ENCODE measurements at regions of chr11 and their contacts with region 1.

Region 1: GRCh38 chr11:33161120-33162005 is at the start of gene CSTF3:
- DNase-seq: peak; percentile 92
- ATAC-seq: peak; percentile 98
- H3K4me3 ChIP-seq: peak within 1 kb of the TSS; percentile 77 to 99 (median 78)
- H3K4me3 Mint-ChIP-seq: peak within 1 kb of the TSS; percentile 99
- H3K27ac ChIP-seq: peak within 1 kb of the TSS; percentile 84 to 88
- H3K27ac Mint-ChIP-seq: peak within 1 kb of the TSS; percentile 95
- H3K4me1 ChIP-seq: peaks cover 25 to 32% of the 10 kb centered on the region in 2 donors
- H3K4me1 Mint-ChIP-seq: peaks cover 49% of the 10 kb centered on the region
- H3K27me3 ChIP-seq: no peaks in the 10 kb centered on the region
- H3K27me3 Mint-ChIP-seq: no peaks in the 10 kb centered on the region
- CTCF ChIP-seq: no peak
- total RNA-seq, gene CSTF3: 38.8 and 42.2 TPM in 2 replicates

Region 2: GRCh38 chr11:32893343-32894148 is 267.8 kb before region 1 on chr11:
- CTCF ChIA-PET with region 1: no interaction called
- POLR2A ChIA-PET with region 1: interaction called, 3 read pairs
- intact Hi-C with region 1: loop called (anchors 2 kb)
- DNase-seq: peak; percentile 79
- ATAC-seq: peak; percentile 44
- H3K4me3 ChIP-seq: peak overlapping the region; percentile 22 to 88 (median 83)
- H3K4me3 Mint-ChIP-seq: peak overlapping the region; percentile 88
- H3K27ac ChIP-seq: peak overlapping the region; percentile 61 to 70
- H3K27ac Mint-ChIP-seq: peak overlapping the region; percentile 93
- H3K4me1 ChIP-seq: peaks cover 12 to 16% of the 10 kb centered on the region in 2 donors
- H3K4me1 Mint-ChIP-seq: peaks cover 36% of the 10 kb centered on the region
- H3K27me3 ChIP-seq: no peaks in the 10 kb centered on the region
- H3K27me3 Mint-ChIP-seq: no peaks in the 10 kb centered on the region
- CTCF ChIP-seq: peak; percentile 63

Region 3: DNA sequence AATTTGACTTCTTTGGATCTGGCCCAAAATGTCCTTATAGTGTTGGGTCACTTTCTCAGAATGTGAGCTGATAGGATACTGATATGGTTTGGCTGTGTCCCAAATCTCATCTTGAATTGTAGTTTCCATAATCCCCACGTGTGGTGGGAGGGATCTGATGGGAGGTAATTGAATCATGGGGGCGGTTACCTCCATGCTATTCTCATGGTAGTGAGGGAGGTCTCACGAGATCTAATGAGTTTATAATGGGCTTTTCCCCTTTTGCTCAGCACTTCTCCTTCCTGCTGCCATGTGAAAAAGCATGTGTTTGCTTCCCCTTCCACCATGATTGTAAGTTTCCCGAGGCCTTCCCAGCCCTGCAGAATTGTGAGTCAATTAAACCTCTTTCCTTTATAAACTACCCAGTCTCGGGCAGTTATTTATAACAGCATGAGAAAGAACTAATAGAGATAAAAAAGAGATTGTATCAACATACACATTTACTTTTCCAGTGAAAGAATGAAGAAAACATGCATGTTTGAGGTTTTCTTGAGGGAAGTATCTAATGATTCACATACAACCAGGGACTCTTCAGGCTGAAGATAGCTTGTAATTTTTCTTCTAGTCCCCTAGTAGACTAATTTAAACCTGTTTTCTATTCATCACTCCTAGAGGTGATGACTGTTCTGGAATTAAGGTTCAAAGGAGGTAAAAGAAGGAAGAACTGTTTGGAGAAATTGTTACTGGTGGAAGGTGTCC is 17.2 kb after region 1 on chr11:
- CTCF ChIA-PET with region 1: interaction called, 10 read pairs
- POLR2A ChIA-PET with region 1: no interaction called
- intact Hi-C with region 1: no loop called
- DNase-seq: no peak
- ATAC-seq: no peak
- H3K4me3 ChIP-seq: no peak overlapping the region
- H3K4me3 Mint-ChIP-seq: no peak overlapping the region
- H3K27ac ChIP-seq: no peak overlapping the region
- H3K27ac Mint-ChIP-seq: no peak overlapping the region
- H3K4me1 ChIP-seq: no peaks in the 10 kb centered on the region
- H3K4me1 Mint-ChIP-seq: no peaks in the 10 kb centered on the region
- H3K27me3 ChIP-seq: no peaks in the 10 kb centered on the region
- H3K27me3 Mint-ChIP-seq: no peaks in the 10 kb centered on the region
- CTCF ChIP-seq: no peak

Region 4: DNA sequence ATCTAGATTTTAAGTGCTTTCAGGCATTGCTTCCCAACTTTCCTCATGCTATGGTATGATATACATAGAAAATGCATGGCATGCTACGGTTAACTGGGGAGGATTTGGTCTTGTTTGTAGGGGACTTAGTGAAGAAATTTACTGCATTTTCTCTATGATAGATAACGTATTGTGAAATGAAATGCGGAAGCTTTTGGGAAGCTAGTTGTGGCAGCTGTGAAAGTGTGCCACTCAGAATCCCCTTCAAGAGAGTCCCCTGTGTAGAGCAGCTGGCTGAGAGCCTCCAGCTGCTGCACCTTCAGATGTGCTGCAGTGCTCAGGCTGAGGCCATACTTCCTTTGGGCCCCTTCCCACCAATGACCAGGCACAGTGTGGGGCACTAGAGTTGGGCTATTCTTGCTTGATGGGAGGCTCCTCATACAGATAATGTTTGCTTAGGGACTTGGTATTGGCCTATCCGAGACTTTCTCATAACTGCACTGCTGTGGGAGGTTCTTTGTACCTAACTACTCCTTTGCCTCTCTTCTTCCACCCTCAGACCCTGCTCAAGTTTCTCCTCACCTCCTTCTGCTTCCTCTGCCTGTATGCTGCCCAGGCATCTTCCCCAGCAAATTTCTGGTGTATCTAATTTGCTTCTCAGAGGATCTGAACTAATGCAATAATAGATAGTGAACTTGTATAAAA is 163.1 kb after region 1 on chr11:
- CTCF ChIA-PET with region 1: interaction called, 83 read pairs
- POLR2A ChIA-PET with region 1: no interaction called
- intact Hi-C with region 1: loop called (anchors 1 kb)
- DNase-seq: peak; percentile 13
- ATAC-seq: no peak
- H3K4me3 ChIP-seq: no peak overlapping the region
- H3K4me3 Mint-ChIP-seq: no peak overlapping the region
- H3K27ac ChIP-seq: no peak overlapping the region
- H3K27ac Mint-ChIP-seq: peak overlapping the region; percentile 53
- H3K4me1 ChIP-seq: peaks cover 16 to 23% of the 10 kb centered on the region in 2 donors
- H3K4me1 Mint-ChIP-seq: peaks cover 26% of the 10 kb centered on the region
- H3K27me3 ChIP-seq: no peaks in the 10 kb centered on the region
- H3K27me3 Mint-ChIP-seq: no peaks in the 10 kb centered on the region
- CTCF ChIP-seq: no peak

Region 5: DNA sequence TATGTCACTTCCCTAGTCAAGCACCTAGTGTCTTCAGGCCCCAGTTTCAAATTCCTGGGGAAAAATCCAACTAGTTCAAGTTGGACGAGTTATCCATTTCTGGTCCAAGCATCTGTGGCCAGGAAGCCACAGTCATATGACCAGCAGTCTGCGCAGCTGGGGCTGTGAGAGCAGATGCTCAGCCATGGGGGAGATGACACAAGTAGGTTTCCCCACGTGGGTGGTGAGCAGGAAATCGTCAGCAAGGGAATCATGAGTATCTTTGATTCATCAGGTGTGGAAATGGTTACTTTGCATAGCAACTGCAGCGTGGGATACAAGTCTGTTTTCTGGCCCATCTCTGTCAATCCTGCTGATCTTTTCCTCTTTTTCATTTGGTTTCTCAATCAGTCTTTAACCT is 354.0 kb after region 1 on chr11:
- CTCF ChIA-PET with region 1: no interaction called
- POLR2A ChIA-PET with region 1: no interaction called
- intact Hi-C with region 1: no loop called
- DNase-seq: no peak
- ATAC-seq: no peak
- H3K4me3 ChIP-seq: no peak overlapping the region
- H3K4me3 Mint-ChIP-seq: no peak overlapping the region
- H3K27ac ChIP-seq: no peak overlapping the region
- H3K27ac Mint-ChIP-seq: no peak overlapping the region
- H3K4me1 ChIP-seq: no peaks in the 10 kb centered on the region
- H3K4me1 Mint-ChIP-seq: no peaks in the 10 kb centered on the region
- H3K27me3 ChIP-seq: peaks cover 0 to 2% (median 0%) of the 10 kb centered on the region in 4 experiments
- H3K27me3 Mint-ChIP-seq: peaks cover 28% of the 10 kb centered on the region
- CTCF ChIP-seq: no peak

Region 6: GRCh38 chr11:33700425-33701271 is 539.3 kb after region 1 on chr11 and contains the start of gene C11orf91:
- CTCF ChIA-PET with region 1: no interaction called
- POLR2A ChIA-PET with region 1: interaction called, 3 read pairs
- intact Hi-C with region 1: loop called (anchors 1 kb)
- DNase-seq: peak; percentile 97
- ATAC-seq: peak; percentile 99
- H3K4me3 ChIP-seq: peak within 1 kb of the TSS; percentile 53 to 74 (median 60)
- H3K4me3 Mint-ChIP-seq: peak within 1 kb of the TSS; percentile 93
- H3K27ac ChIP-seq: no peak within 1 kb of the TSS
- H3K27ac Mint-ChIP-seq: peak within 1 kb of the TSS; percentile 57
- H3K4me1 ChIP-seq: peaks cover 6 to 16% of the 10 kb centered on the region in 2 donors
- H3K4me1 Mint-ChIP-seq: peaks cover 17% of the 10 kb centered on the region
- H3K27me3 ChIP-seq: peaks cover 0 to 14% (median 3%) of the 10 kb centered on the region in 4 experiments
- H3K27me3 Mint-ChIP-seq: peaks cover 5% of the 10 kb centered on the region
- CTCF ChIP-seq: no peak
- total RNA-seq, gene C11orf91: not detected in 2 replicates

Region 7: GRCh38 chr11:33829433-33830141 is 668.2 kb after region 1 on chr11:
- CTCF ChIA-PET with region 1: interaction called, 3 read pairs
- POLR2A ChIA-PET with region 1: no interaction called
- intact Hi-C with region 1: loop called (anchors 2 kb)
- DNase-seq: peak; percentile 73
- ATAC-seq: peak; percentile 76
- H3K4me3 ChIP-seq: peak overlapping the region in 3 of 5 experiments; percentile 28 to 48 (median 32)
- H3K4me3 Mint-ChIP-seq: peak overlapping the region; percentile 86
- H3K27ac ChIP-seq: no peak overlapping the region
- H3K27ac Mint-ChIP-seq: no peak overlapping the region
- H3K4me1 ChIP-seq: peaks cover 10 to 14% of the 10 kb centered on the region in 2 donors
- H3K4me1 Mint-ChIP-seq: peaks cover 8% of the 10 kb centered on the region
- H3K27me3 ChIP-seq: peaks cover 0 to 39% (median 36%) of the 10 kb centered on the region in 4 experiments
- H3K27me3 Mint-ChIP-seq: peaks cover 49% of the 10 kb centered on the region
- CTCF ChIP-seq: peak; percentile 77

Measured in B cell (primary cell).